Activated T-helper 2 cell treated with anti-CD3 and anti-CD28 coated beads, Interferon-gamma antibody, Interleukin-2, Interleukin-4, amounts not matched to agents 10 μg/mL and 5 μg/mL and 100 μg/mL, durations not matched to agents 14 hours and 24 hours and 36 hours (primary cell): ENCODE measurements at regions of chr3 and their contacts with region 1.

Region 1: DNA sequence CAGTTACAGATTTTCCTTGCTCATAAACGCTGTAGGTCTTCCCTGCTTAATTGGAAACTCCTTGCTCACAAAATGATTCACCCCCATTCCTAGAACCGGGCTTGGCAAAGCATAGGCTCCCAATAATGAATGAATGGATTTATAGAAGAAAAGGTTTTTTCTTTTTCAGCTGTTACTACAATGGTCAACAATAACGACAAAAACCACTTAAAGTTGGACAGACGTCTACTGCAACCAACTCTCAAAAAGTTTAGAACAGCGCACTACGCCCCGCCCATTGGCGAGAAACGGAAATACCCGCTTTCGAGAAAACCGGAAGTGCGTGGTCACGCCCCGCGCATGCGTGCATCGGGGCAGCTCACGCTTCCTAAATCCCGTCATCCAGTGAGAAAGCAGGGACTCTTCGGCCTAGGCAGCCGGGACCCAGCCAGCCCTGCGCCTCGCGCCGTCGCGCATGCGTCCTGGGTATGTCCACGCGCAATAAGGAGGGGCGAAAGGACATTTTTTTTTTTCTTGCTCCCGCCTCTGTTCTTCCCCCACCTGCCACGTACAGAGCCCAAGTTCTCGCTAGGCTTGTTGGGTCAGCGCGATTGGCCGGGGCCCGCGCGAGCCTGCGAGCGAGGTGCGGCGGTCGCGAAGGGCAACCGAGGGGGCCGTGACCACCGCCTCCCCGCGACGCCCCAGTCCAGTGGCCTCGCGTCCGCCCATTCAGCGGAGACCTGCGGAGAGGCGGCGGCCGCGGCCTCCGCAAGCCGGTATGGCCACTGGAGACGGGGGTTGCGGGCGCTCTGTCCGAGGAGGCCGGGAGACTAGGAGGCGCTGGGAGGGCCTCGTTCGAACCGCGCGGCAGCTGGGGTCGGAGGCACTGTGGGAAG is at the start of gene TFG:
- DNase-seq: peak; percentile 98
- H3K4me3 Mint-ChIP-seq: peak within 1 kb of the TSS; percentile 83
- H3K27ac Mint-ChIP-seq: peak within 1 kb of the TSS; percentile 85
- H3K4me1 Mint-ChIP-seq: peaks cover 41% of the 10 kb centered on the region
- H3K27me3 Mint-ChIP-seq: no peaks in the 10 kb centered on the region
- total RNA-seq, gene TFG: 79.3 and 81.2 TPM in 2 replicates

Region 2: DNA sequence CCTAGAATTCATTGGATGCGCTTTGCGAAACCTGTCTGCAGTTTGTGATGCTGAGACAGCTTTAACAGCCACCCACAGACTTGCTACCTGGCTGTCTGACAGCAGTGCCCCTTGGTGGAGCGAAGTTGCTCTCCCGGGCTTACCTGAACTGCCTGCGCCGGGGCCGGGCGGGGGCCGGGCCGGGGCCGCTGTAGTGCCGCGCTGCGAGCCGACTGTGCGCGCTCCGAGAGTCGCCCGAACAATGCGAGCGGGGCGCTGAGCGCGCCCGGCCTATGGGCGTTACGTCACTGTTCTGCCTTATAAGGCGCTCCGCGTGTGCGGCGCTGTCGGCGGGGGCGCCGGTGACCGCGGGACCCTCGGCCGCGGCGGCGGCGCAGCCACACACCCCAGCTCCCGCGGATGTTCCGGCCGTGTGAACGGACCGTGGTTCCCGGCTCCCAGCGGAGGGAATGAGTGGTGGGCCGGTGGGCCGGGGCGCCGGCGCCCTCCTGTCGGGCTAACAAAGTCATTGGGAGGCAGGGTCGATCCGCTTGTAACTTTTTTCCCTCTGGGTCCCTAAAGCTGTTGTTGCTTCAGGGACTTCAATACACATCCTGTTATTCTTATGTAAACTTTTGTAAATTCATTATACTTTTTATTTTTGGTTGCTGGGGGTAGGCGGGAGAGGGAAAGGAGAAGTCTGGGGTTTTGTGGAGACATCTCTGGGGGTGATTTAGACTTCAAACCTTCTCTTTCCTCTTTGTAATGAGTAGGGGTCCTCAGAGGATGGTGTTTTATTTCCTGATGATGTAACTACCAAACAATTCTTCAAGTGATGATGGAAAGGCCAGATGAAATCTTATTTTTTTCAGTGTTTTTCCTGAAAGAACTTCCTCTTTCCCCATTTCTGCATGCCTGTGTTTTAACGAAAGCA is 833.0 kb before region 1 on chr3:
- intact Hi-C with region 1: loop called (anchors 5 kb)
- DNase-seq: peak; percentile 70
- H3K4me3 Mint-ChIP-seq: peak overlapping the region; percentile 83
- H3K27ac Mint-ChIP-seq: no peak overlapping the region
- H3K4me1 Mint-ChIP-seq: peaks cover 52% of the 10 kb centered on the region
- H3K27me3 Mint-ChIP-seq: peaks cover 1% of the 10 kb centered on the region

Region 3: DNA sequence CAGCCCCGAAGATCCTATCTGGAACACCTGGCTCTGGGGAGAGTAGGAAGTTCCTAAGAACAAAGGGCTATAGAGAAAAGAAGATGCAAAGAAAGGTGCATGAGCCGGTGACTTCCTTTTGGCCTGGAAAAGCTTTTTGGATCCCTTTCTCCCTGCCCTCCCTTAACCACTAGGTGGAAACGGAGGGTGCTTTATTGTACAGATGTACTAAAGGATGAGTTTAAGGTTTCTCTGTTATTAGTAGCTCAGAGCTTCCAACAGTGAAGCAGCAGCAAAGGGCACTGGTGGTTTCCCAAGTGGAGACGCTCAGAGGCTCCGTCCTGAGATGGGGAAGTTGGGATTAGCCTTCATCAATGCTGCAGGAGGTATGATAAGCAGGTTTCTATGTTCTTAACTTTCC is 105.7 kb before region 1 on chr3:
- intact Hi-C with region 1: loop called (anchors 5 kb)
- DNase-seq: no peak
- H3K4me3 Mint-ChIP-seq: peak overlapping the region; percentile 56
- H3K27ac Mint-ChIP-seq: peak overlapping the region; percentile 54
- H3K4me1 Mint-ChIP-seq: peaks cover 34% of the 10 kb centered on the region
- H3K27me3 Mint-ChIP-seq: peaks cover 8% of the 10 kb centered on the region

Region 4: DNA sequence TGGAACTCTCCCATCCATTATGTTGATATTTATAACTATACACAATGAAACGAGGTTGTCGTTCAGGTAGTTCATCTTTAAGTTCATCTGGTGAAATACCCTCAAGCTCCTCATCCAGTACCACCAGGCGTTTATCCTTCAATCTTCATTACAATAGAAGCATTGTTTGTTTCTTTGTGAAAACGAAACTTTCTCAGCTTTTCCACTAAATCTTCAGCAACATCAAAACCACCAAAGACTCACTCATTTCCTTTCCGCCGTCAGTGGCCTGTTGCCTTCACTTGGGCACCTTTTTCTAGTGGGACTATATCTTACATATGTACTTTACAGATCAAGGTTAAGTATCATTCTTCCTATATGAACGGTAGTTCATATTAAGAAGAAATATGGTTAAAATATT is 44.0 kb before region 1 on chr3:
- intact Hi-C with region 1: loop called (anchors 1 kb)
- DNase-seq: peak; percentile 50
- H3K4me3 Mint-ChIP-seq: peak overlapping the region; percentile 50
- H3K27ac Mint-ChIP-seq: peak overlapping the region; percentile 57
- H3K4me1 Mint-ChIP-seq: peaks cover 32% of the 10 kb centered on the region
- H3K27me3 Mint-ChIP-seq: peaks cover 3% of the 10 kb centered on the region

Region 5: GRCh38 chr3:100682854-100683760 is 26.1 kb before region 1 on chr3:
- intact Hi-C with region 1: no loop called
- DNase-seq: no peak
- H3K4me3 Mint-ChIP-seq: no peak overlapping the region
- H3K27ac Mint-ChIP-seq: no peak overlapping the region
- H3K4me1 Mint-ChIP-seq: no peaks in the 10 kb centered on the region
- H3K27me3 Mint-ChIP-seq: peaks cover 8% of the 10 kb centered on the region

Region 6: DNA sequence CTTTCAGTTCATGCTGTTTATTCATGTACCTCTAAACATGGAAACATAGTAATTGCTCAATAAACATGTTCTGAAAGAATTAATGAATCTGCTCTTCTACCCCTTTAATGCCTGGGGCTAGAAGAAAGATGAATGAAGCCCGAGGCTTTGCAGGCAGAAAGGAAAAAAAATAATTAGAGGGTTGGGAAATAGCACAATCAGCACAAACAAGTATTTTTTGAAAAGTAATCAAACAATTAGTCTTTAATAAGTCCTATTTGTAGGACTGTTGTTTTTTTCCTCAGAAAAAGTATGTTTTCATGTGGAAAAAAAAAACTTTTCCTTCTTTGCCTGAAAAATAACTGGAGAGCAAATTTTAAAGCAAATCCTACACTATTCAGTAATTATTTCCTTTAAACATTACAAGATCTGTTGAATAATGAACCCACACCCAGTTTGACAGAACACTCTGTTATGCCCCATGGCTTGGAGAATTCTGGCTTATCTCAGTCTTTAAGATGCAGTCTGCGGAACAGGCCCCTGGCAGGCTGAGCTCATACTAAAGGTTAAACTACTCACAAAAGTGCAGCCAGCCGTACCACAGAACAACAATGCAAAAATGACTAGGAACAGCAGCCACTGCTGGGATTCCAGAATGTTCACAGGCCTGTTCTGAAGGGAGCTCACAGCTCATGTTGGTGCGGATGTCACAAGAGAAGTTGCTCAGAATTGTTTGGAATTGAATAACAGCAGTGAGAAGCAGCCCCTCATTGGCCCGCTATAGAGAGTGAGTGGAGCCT is 204.9 kb after region 1 on chr3:
- intact Hi-C with region 1: no loop called
- DNase-seq: no peak
- H3K4me3 Mint-ChIP-seq: no peak overlapping the region
- H3K27ac Mint-ChIP-seq: no peak overlapping the region
- H3K4me1 Mint-ChIP-seq: no peaks in the 10 kb centered on the region
- H3K27me3 Mint-ChIP-seq: peaks cover 4% of the 10 kb centered on the region

Region 7: GRCh38 chr3:101676765-101677435 is 967.7 kb after region 1 on chr3 and contains the start of gene ZBTB11:
- intact Hi-C with region 1: loop called (anchors 1 kb)
- DNase-seq: peak; percentile 99
- H3K4me3 Mint-ChIP-seq: peak within 1 kb of the TSS; percentile 94
- H3K27ac Mint-ChIP-seq: peak within 1 kb of the TSS; percentile 94
- H3K4me1 Mint-ChIP-seq: peaks cover 46% of the 10 kb centered on the region
- H3K27me3 Mint-ChIP-seq: no peaks in the 10 kb centered on the region
- total RNA-seq, gene ZBTB11: 27.5 and 29.6 TPM in 2 replicates